Natural killer cell (primary cell): ENCODE measurements at regions of chr19 and their contacts with region 1.

Region 1: DNA sequence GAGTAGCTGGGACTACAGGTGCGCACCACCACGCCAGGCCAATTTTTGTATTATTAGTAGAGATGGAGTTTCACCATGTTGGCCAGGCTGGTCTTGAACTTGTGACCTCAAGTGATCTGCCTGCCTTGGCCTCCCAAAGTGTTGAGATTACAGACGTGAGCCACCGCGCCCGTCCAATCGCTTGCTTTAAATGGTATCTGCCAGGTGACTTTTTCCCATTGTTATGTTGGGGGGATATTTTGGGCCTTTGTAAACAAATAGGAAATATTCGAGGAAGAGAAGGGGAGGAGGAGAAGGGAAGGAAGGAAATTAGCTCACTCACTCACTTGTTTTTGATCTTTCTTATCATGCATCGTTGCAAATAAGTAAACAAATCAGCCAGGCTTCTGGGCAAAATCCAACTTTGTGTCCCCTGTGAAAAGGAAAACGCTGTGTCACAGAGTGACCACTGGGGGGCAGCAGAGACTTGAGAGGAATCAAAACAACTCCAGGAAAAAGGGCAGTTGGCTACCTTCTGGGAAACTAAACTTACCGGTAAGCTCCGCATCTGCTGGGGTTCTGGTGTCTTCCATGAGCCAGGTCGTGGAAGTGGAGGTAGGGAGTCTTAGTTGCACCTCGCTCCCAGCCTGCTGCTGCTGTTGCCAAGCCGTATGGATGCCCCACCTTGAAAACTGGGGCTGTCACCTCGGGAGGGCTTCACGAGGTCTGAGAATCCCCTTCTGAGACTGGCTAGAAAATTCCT is 9.3 kb upstream of the RANBP3 start:
- DNase-seq: peak; percentile 59 to 86
- ATAC-seq: peak; percentile 79 to 89 (median 83)
- H3K4me3 ChIP-seq: peak overlapping the region; percentile 31
- H3K4me3 Mint-ChIP-seq: peak overlapping the region; percentile 81
- H3K27ac ChIP-seq: no peak overlapping the region
- H3K27ac Mint-ChIP-seq: peak overlapping the region in 1 of 2 donors; percentile 26
- H3K4me1 ChIP-seq: peaks cover 6% of the 10 kb centered on the region
- H3K4me1 Mint-ChIP-seq: peaks cover 9 to 15% of the 10 kb centered on the region in 2 donors
- H3K27me3 ChIP-seq: no peaks in the 10 kb centered on the region
- H3K27me3 Mint-ChIP-seq: peaks cover 0 to 7% of the 10 kb centered on the region in 2 donors
- CTCF ChIP-seq: peak; percentile 91

Region 2: GRCh38 chr19:6021878-6022569 is 34.8 kb after region 1 on chr19:
- intact Hi-C with region 1: loop called (anchors 1 kb)
- DNase-seq: peak; percentile 58 to 90
- ATAC-seq: peak; percentile 74 to 89 (median 89)
- H3K4me3 ChIP-seq: no peak overlapping the region
- H3K4me3 Mint-ChIP-seq: no peak overlapping the region
- H3K27ac ChIP-seq: no peak overlapping the region
- H3K27ac Mint-ChIP-seq: no peak overlapping the region
- H3K4me1 ChIP-seq: no peaks in the 10 kb centered on the region
- H3K4me1 Mint-ChIP-seq: no peaks in the 10 kb centered on the region
- H3K27me3 ChIP-seq: no peaks in the 10 kb centered on the region
- H3K27me3 Mint-ChIP-seq: peaks cover 0 to 3% of the 10 kb centered on the region in 2 donors
- CTCF ChIP-seq: peak; percentile 51

Region 3: GRCh38 chr19:6125571-6125989 is 138.3 kb after region 1 on chr19:
- intact Hi-C with region 1: loop called (anchors 10 kb)
- DNase-seq: peak; percentile 39 to 88
- ATAC-seq: peak; percentile 83 to 97 (median 89)
- H3K4me3 ChIP-seq: no peak overlapping the region
- H3K4me3 Mint-ChIP-seq: no peak overlapping the region
- H3K27ac ChIP-seq: no peak overlapping the region
- H3K27ac Mint-ChIP-seq: no peak overlapping the region
- H3K4me1 ChIP-seq: no peaks in the 10 kb centered on the region
- H3K4me1 Mint-ChIP-seq: no peaks in the 10 kb centered on the region
- H3K27me3 ChIP-seq: no peaks in the 10 kb centered on the region
- H3K27me3 Mint-ChIP-seq: peaks cover 3 to 8% of the 10 kb centered on the region in 2 donors
- CTCF ChIP-seq: peak; percentile 93